ENCODE measurements at regions of chr2 and their contacts with region 1.

Region 1: DNA sequence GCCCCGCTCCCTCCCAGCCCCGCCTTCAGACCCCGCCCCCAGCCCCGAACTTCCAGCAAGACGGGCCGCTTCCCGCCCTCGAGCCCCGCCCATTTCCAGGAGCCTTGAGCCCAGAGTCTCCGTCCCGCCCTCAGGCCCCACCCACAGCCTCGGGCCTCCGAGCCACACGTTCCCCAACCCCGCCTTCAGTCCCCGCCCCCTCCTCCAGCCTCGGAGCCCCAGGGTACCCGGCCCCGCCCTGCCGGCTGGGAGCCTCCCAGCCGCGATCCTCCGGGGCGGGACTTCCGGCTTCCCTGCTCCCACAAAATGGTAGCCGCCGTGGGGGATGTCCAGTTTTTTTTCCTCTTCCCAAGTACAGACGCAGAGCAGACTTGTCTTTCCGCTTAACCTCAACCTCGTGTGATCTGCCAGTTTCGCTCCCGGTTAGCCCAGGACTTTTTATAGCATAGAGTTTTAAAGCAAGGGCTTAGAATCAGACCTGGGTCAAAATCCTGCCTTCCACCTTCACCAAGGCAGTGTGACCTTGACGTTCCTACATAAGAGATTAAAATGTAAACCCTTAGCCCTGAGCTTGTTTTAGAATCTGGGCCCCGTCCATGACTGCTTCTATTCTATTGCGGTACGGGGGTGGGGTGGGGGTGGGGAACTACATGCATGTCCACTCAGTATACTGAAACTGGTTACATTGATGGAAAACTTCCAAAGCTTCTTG is 435 bp upstream of the GPR155 start:
- DNase-seq: peak; percentile 86
- ATAC-seq: peak; percentile 97
- H3K4me3 Mint-ChIP-seq: peak overlapping the region; percentile 96
- H3K27ac Mint-ChIP-seq: peak overlapping the region; percentile 93
- H3K4me1 Mint-ChIP-seq: peaks cover 41% of the 10 kb centered on the region
- H3K27me3 Mint-ChIP-seq: no peaks in the 10 kb centered on the region
- CTCF ChIP-seq: no peak

Region 2: DNA sequence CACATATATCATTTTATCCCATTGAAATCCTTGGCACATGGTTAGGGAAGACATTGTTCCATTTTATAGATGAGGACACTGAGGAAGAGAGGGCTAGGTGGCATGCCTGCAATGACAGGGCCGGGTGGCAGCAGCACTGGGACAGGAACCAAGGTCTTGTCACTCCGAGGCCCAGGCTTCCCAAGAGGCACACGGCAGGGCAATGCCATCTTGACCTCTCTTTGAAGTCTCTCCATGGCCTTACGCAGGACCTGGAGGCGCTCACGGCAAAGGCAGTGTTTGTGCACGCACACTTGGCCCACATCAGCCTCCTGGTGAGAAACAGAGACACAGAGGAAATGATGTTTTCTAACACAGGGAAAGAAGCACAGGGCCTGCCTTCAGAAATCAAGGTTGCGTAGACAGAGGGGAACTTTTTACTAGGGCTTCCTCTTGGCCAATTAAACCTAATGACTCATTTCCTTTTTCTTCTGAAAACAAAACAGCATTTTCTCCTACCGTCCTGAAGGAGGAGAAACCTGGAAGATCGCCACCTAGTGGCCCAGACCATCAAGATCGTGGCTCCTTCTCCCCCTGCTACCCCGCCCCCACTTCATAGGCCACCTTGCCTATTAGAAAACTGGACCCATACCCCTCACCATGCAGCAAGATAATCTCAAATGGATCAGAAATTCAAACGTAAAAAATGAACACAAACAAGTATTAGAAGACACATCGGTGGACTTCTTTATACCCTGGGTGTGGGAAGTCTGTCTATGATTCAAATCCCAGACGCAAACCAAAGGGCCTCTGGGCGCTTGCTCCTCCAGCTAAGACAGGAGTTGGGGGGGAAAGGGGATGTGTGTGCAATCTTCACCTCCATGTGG is 447.5 kb before region 1 on chr2:
- CTCF ChIA-PET with region 1: no interaction called
- POLR2A ChIA-PET with region 1: no interaction called
- intact Hi-C with region 1: loop called (anchors 5 kb)
- DNase-seq: peak; percentile 69
- ATAC-seq: peak; percentile 93
- H3K4me3 Mint-ChIP-seq: peak overlapping the region; percentile 50
- H3K27ac Mint-ChIP-seq: peak overlapping the region; percentile 92
- H3K4me1 Mint-ChIP-seq: peaks cover 28% of the 10 kb centered on the region
- H3K27me3 Mint-ChIP-seq: no peaks in the 10 kb centered on the region
- CTCF ChIP-seq: no peak

Region 3: GRCh38 chr2:174553811-174554493 is 66.7 kb after region 1 on chr2:
- CTCF ChIA-PET with region 1: no interaction called
- POLR2A ChIA-PET with region 1: no interaction called
- intact Hi-C with region 1: loop called (anchors 2 kb)
- DNase-seq: no peak
- ATAC-seq: peak; percentile 87
- H3K4me3 Mint-ChIP-seq: peak overlapping the region; percentile 40
- H3K27ac Mint-ChIP-seq: peak overlapping the region; percentile 88
- H3K4me1 Mint-ChIP-seq: peaks cover 33% of the 10 kb centered on the region
- H3K27me3 Mint-ChIP-seq: no peaks in the 10 kb centered on the region
- CTCF ChIP-seq: no peak

Region 4: DNA sequence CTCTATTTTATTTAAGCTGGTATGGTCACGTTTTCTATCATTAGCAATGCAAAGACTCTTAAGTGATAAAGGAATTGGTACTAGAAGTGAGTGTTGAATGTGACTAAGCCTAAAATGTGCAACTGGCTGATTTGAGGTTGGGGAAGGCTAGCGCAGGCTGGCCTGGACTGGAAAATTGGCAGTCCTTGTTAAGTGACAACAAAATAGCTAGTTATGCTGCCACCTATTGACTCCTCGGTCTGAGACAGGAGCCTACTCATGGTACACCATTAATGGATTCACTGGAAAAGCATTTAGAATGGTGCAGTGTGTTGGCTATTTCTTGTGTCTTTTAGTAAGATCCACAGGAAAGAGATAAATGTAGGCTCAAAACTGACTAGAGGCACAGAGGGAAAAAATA is 116.0 kb after region 1 on chr2:
- CTCF ChIA-PET with region 1: no interaction called
- POLR2A ChIA-PET with region 1: interaction called, 12 read pairs
- intact Hi-C with region 1: loop called (anchors 2 kb)
- DNase-seq: no peak
- ATAC-seq: peak; percentile 25
- H3K4me3 Mint-ChIP-seq: no peak overlapping the region
- H3K27ac Mint-ChIP-seq: peak overlapping the region; percentile 68
- H3K4me1 Mint-ChIP-seq: peaks cover 82% of the 10 kb centered on the region
- H3K27me3 Mint-ChIP-seq: no peaks in the 10 kb centered on the region
- CTCF ChIP-seq: no peak

Region 5: GRCh38 chr2:174748948-174749347 is 261.7 kb after region 1 on chr2:
- CTCF ChIA-PET with region 1: no interaction called
- POLR2A ChIA-PET with region 1: no interaction called
- intact Hi-C with region 1: loop called (anchors 5 kb)
- DNase-seq: peak; percentile 41
- ATAC-seq: peak; percentile 35
- H3K4me3 Mint-ChIP-seq: peak overlapping the region; percentile 47
- H3K27ac Mint-ChIP-seq: peak overlapping the region; percentile 44
- H3K4me1 Mint-ChIP-seq: peaks cover 47% of the 10 kb centered on the region
- H3K27me3 Mint-ChIP-seq: peaks cover 3% of the 10 kb centered on the region
- CTCF ChIP-seq: peak; percentile 67

Region 6: GRCh38 chr2:175468431-175469098 is 981.3 kb after region 1 on chr2:
- CTCF ChIA-PET with region 1: no interaction called
- POLR2A ChIA-PET with region 1: no interaction called
- intact Hi-C with region 1: no loop called
- DNase-seq: no peak
- ATAC-seq: no peak
- H3K4me3 Mint-ChIP-seq: no peak overlapping the region
- H3K27ac Mint-ChIP-seq: no peak overlapping the region
- H3K4me1 Mint-ChIP-seq: no peaks in the 10 kb centered on the region
- H3K27me3 Mint-ChIP-seq: no peaks in the 10 kb centered on the region
- CTCF ChIP-seq: no peak

Measured in activated B cell treated with CpG ODN at 0.5 μM for 24 hours (primary cell).